Activated CD4-positive, alpha-beta T cell treated with anti-CD3 and anti-CD28 coated beads, Interleukin-2, amount 10 ng/mL, durations not matched to agents 24 days and 14 days (primary cell): ENCODE measurements at regions of chr1 and their contacts with region 1.

Region 1: DNA sequence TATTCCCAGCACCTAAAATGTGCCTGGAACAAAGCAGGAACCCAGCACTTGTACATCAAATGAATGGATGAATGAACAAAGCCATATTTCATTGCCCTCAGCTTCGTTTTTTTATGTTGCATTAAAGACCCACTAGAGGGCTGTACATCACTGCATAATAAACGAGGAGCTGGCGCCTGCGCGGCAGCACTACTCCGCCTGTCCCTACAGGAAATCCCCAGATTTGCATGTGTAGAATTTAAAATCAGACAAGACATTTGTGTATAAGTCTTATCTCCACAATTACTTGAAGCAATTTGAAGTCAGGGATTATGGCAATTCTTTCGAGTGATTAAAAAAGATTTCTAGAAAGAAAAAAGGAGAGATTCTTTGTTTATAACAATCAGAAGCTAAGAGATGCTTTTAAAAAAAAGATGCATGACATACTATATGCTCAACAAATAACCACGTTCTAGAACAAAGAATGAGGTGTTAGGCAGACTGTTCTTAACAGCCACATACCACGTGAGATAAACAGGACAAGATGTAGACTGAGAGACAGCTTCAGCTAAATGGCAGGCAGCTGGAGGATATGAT is 5.4 kb upstream of the NEK2 start:
- DNase-seq: peak; percentile 91
- H3K4me3 Mint-ChIP-seq: peak overlapping the region; percentile 49
- H3K27ac Mint-ChIP-seq: peak overlapping the region; percentile 84
- H3K4me1 Mint-ChIP-seq: peaks cover 8% of the 10 kb centered on the region
- H3K27me3 Mint-ChIP-seq: peaks cover 7% of the 10 kb centered on the region

Region 2: DNA sequence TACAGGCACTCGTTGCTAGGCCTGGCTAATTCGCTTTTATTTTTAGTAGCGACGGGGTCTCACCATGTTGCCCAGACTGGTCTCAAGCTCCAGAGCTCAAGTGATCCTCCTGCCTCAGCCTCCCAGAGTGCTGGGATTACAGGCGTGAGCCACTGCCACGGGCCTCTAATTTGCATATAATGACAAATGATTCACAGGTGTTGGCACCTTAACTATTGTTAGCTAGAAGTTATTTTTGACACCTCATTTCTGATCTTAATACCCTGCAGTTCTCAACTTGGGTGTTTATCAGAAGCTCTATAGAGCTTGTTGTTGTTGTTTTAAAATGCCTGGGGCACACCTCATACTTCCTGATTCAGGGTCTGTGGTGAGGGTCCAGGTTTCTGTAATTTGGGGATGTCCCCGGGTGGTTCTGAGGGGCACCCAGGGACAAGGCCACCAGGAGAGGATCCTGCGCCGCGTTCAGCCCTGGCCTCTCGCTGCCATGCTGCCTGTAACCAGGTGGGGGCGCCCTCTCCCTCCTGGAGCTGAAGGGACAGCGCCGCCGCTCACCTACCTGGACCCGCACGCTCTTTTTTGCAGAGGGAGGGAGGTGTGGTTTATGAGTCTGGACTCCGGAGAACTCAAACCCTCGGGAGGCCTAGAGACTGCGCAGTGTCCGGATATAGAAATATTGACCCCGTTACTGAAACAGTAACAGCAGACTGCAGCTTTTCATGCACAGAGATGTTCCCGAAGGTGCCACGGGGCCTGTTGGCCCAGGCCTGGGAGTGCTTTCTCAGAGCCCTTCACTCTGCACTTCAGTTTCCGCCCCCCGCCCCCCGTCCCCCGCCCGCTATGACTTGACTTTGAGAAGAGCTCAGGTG is 17.6 kb after region 1 on chr1:
- intact Hi-C with region 1: loop called (anchors 2 kb)
- DNase-seq: peak; percentile 96
- H3K4me3 Mint-ChIP-seq: peak overlapping the region; percentile 63
- H3K27ac Mint-ChIP-seq: no peak overlapping the region
- H3K4me1 Mint-ChIP-seq: peaks cover 30% of the 10 kb centered on the region
- H3K27me3 Mint-ChIP-seq: peaks cover 20% of the 10 kb centered on the region

Region 3: DNA sequence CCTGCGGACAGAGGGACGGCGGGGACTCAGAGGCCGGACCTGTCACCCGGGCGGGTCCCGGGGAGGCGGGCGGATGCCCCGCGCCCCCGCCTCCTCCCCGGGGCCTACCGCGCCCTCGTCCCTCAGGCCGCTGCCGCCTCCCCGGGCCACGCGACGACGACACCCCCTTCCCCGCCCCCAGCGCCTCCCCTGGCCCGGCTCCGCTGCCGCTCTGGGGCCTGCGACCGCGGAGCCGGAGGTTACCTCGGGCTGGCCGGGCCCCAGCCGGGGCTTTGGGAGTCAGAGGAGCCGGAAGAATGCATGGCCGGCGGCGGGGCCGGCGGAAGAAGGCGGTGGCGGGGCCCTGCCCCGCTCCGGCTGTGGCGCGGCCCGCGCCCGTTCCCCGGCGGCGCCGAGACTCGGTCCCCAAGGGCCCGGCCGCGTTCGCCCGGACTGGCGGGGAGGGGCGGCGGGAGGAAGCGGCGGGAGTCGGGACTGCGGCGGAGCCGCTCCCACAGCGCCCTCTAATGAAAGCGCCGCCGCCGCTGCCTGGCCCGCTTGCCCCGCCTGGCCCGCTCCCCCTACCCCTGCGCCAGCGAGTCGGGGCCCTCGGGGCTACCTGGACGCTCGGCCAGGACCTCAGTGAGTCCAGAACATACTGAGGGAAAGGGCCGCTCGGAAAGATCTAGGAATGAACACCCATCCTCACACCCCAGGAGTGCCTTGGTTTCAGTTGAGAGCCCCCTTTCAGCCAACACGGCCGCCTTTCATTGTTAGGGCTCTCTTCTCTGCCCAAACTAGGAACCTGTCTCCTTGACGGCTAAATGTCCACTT is 149.7 kb after region 1 on chr1 and contains the start of gene LPGAT1:
- intact Hi-C with region 1: loop called (anchors 1 kb)
- DNase-seq: peak; percentile 91
- H3K4me3 Mint-ChIP-seq: peak within 1 kb of the TSS; percentile 91
- H3K27ac Mint-ChIP-seq: peak within 1 kb of the TSS; percentile 88
- H3K4me1 Mint-ChIP-seq: peaks cover 62% of the 10 kb centered on the region
- H3K27me3 Mint-ChIP-seq: no peaks in the 10 kb centered on the region
- total RNA-seq, gene LPGAT1: 35.6 and 42.1 TPM in 2 replicates

Region 4: GRCh38 chr1:211939876-211940468 is 259.1 kb after region 1 on chr1:
- intact Hi-C with region 1: loop called (anchors 2 kb)
- DNase-seq: peak; percentile 79
- H3K4me3 Mint-ChIP-seq: peak overlapping the region; percentile 26
- H3K27ac Mint-ChIP-seq: peak overlapping the region; percentile 34
- H3K4me1 Mint-ChIP-seq: peaks cover 35% of the 10 kb centered on the region
- H3K27me3 Mint-ChIP-seq: no peaks in the 10 kb centered on the region

Region 5: GRCh38 chr1:212012034-212012740 is 331.3 kb after region 1 on chr1:
- intact Hi-C with region 1: loop called (anchors 1 kb)
- DNase-seq: peak; percentile 89
- H3K4me3 Mint-ChIP-seq: no peak overlapping the region
- H3K27ac Mint-ChIP-seq: no peak overlapping the region
- H3K4me1 Mint-ChIP-seq: peaks cover 3% of the 10 kb centered on the region
- H3K27me3 Mint-ChIP-seq: no peaks in the 10 kb centered on the region

Region 6: GRCh38 chr1:212368073-212368484 is 687.2 kb after region 1 on chr1:
- intact Hi-C with region 1: loop called (anchors 2 kb)
- DNase-seq: peak; percentile 88
- H3K4me3 Mint-ChIP-seq: no peak overlapping the region
- H3K27ac Mint-ChIP-seq: no peak overlapping the region
- H3K4me1 Mint-ChIP-seq: no peaks in the 10 kb centered on the region
- H3K27me3 Mint-ChIP-seq: no peaks in the 10 kb centered on the region

Region 7: DNA sequence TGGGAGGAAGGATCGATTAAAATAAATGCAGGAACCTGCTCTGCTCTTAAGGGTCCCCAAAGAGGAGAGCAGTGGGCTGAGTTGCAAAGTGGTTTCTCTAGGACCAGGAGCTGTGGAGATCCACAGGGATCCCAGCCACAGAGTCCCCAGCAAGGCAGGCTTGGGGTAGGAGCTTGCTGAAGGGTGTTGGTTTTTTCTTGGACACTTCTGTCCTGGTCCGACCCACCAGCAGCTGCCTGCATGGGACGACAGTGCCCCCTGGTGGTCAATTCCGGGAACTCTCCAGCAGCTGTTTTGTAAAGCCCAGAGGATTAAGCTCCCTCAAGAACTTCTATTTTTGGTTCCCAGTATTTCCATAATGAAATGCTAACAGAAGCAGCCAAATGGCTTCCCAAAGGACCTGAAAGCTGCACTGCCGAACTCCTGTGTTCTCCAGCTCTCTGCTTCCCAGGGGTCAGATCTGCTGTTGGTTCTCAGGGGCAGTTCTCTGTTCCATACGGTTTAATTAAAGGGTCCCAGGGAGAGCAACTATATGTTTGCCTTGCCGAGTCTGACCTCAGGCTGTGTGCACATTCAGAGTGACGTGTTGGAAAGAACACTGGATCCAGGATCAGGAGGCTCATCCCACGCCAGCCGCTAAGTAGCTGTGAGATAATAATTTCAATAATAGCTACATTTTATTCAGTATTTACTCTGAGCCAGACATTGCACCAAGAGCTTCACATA is 775.1 kb after region 1 on chr1:
- intact Hi-C with region 1: loop called (anchors 1 kb)
- DNase-seq: peak; percentile 95
- H3K4me3 Mint-ChIP-seq: no peak overlapping the region
- H3K27ac Mint-ChIP-seq: no peak overlapping the region
- H3K4me1 Mint-ChIP-seq: peaks cover 12% of the 10 kb centered on the region
- H3K27me3 Mint-ChIP-seq: no peaks in the 10 kb centered on the region